PC-9 (cell line): ENCODE measurements at regions of chr12 and their contacts with region 1.

Region 1: DNA sequence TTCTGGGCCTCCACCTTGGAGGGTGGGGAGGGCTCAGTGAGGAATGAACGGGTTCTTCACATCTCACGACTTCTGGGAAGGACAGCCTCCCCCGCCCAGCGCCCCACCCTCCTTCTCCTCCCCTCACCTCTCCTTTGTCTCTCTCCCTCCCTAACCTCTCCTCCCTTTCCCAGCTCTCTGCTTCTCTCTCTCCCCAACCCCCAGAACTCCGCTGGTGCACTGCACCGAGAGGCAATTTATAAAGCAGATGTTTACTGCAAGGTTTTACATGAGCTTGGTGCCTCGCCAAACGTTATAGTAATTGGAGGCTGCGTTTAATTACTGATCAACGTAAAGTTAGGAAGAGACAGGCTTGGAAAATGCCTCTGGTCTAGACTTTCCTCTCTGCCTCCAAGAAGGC is 42.9 kb upstream of the FAM222A start:
- DNase-seq: no peak
- H3K4me3 ChIP-seq: no peak overlapping the region
- H3K27ac ChIP-seq: no peak overlapping the region
- H3K4me1 ChIP-seq: no peaks in the 10 kb centered on the region
- H3K27me3 ChIP-seq: peaks cover 58% of the 10 kb centered on the region
- CTCF ChIP-seq: no peak

Region 2: GRCh38 chr12:109710205-109710653 is 39.5 kb after region 1 on chr12:
- CTCF ChIA-PET with region 1: no interaction called
- POLR2A ChIA-PET with region 1: no interaction called
- intact Hi-C with region 1: no loop called
- DNase-seq: no peak
- H3K4me3 ChIP-seq: no peak overlapping the region
- H3K27ac ChIP-seq: no peak overlapping the region
- H3K4me1 ChIP-seq: peaks cover 25% of the 10 kb centered on the region
- H3K27me3 ChIP-seq: no peaks in the 10 kb centered on the region
- CTCF ChIP-seq: no peak

Region 3: DNA sequence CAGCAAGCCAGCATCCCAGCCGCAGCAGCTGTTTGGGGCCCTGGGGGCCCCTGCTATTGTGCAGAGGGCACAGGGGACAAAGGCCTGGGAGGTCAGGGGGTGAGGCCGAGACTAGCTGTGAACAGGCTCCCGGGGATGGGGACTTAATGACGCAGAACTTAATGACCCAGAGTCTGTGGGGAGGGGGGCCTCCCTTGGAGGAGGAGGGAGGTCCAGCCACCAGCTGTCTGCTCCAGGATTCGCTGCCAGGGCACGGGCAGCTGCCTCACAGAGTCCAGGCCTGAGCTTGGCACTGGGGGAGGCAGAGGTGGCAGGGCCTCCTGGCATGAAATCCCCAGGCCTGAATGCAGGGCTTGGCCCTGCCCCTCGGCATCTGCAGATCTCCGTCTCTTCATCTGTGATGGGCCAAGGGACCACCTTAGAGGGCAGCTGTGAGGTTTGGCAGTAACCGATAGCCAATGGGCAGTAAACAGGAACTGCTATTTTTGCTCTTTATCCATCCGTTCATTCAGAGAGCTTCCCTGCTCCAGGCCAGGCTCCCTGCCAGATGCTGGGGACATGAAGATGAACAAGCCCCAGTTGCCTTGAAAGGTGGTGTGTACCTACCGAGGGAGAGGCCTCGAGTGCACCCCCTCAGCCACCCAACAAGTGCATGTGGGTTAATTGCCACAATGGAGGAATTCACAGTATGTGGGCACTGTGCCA is 49.6 kb after region 1 on chr12:
- CTCF ChIA-PET with region 1: interaction called, 10 read pairs
- POLR2A ChIA-PET with region 1: no interaction called
- intact Hi-C with region 1: no loop called
- DNase-seq: no peak
- H3K4me3 ChIP-seq: no peak overlapping the region
- H3K27ac ChIP-seq: no peak overlapping the region
- H3K4me1 ChIP-seq: 0 out of 2 replicates have a peak, but pooled peaks cover 1% of the 10 kb centered on the region
- H3K27me3 ChIP-seq: no peaks in the 10 kb centered on the region
- CTCF ChIP-seq: no peak

Region 4: GRCh38 chr12:110199339-110200123 is 528.8 kb after region 1 on chr12:
- CTCF ChIA-PET with region 1: no interaction called
- POLR2A ChIA-PET with region 1: no interaction called
- intact Hi-C with region 1: no loop called
- DNase-seq: no peak
- H3K4me3 ChIP-seq: no peak overlapping the region
- H3K27ac ChIP-seq: no peak overlapping the region
- H3K4me1 ChIP-seq: no peaks in the 10 kb centered on the region
- H3K27me3 ChIP-seq: no peaks in the 10 kb centered on the region
- CTCF ChIP-seq: no peak

Region 5: GRCh38 chr12:110742718-110743570 is 1072.2 kb after region 1 on chr12 and contains the start of gene PPP1CC:
- CTCF ChIA-PET with region 1: no interaction called
- POLR2A ChIA-PET with region 1: interaction called, 13 read pairs
- intact Hi-C with region 1: no loop called
- DNase-seq: peak; percentile 84 to 89
- H3K4me3 ChIP-seq: peak within 1 kb of the TSS; percentile 66
- H3K27ac ChIP-seq: peak within 1 kb of the TSS; percentile 70
- H3K4me1 ChIP-seq: peaks cover 48% of the 10 kb centered on the region
- H3K27me3 ChIP-seq: no peaks in the 10 kb centered on the region
- CTCF ChIP-seq: no peak
- total RNA-seq, gene PPP1CC: 149 and 170 TPM in 2 replicates